ENCODE measurements at regions of chr9 and their contacts with region 1.

Region 1: DNA sequence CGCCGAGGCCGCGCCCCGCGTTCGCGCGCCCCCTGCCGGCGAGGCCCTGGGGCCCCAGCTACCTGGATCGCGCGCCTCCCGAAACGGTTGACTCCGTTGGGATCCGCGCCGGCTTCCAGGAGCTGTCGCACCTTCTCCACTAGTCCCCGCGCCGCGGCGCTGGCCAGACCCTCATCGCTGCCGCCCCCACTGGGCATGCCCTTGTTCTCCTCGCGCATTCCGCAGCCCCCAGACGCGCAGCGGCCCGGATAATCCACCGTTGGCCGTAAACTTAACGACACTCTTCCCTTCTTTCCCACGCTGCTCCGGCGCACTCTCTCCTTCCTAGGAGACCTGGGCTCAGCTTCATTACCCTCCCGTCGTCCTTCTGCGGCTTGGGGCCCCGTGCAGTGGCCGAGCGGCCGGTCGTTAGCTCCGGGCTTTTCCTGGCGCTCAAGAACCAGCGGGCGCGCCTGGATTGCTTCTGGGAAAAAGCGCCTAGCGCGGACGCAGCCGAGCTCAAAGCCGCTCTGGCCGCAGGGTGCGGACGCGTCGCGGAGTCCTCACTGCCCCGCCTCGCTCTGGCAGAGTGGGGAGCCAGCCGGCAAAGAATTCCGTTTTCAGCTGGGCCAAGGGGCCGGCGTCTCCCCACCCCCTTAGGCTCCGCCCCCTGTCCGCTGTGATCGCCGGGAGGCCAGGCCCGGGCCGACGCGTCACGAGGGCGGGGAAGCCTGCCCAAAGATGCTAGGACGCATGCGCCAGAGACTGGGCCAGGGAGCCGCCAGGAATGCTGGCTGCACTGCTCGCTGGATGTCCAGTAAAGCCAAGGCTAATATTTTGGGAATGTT is at the start of gene CDKN2B:
- DNase-seq: peak in 6 of 9 donors; percentile 30 to 82 (median 53)
- ATAC-seq: peak; percentile 90
- H3K4me3 ChIP-seq: peak within 1 kb of the TSS; percentile 57
- H3K4me3 Mint-ChIP-seq: peak within 1 kb of the TSS; percentile 46 to 86 (median 71)
- H3K27ac ChIP-seq: no peak within 1 kb of the TSS
- H3K27ac Mint-ChIP-seq: peak within 1 kb of the TSS in 2 of 9 donors; percentile 14 to 61
- H3K4me1 ChIP-seq: peaks cover 9 to 20% of the 10 kb centered on the region in 2 donors
- H3K4me1 Mint-ChIP-seq: peaks cover 17 to 32% (median 23%) of the 10 kb centered on the region in 7 donors
- H3K27me3 ChIP-seq: peaks cover 3 to 46% of the 10 kb centered on the region in 2 donors
- H3K27me3 Mint-ChIP-seq: peaks cover 67 to 84% (median 71%) of the 10 kb centered on the region in 5 donors
- total RNA-seq, gene CDKN2B: 0.32 to 4.1 (median 1.6) TPM in 3 of 5 experiments, not detected in the others

Region 2: GRCh38 chr9:21919377-21920362 is 89.3 kb before region 1 on chr9:
- CTCF ChIA-PET with region 1: no interaction called
- POLR2A ChIA-PET with region 1: no interaction called
- intact Hi-C with region 1: loop called in 1 of 2 experiments (anchors 2 kb)
- DNase-seq: peak in 7 of 9 donors; percentile 39 to 78 (median 60)
- ATAC-seq: peak; percentile 80
- H3K4me3 ChIP-seq: peak overlapping the region; percentile 2
- H3K4me3 Mint-ChIP-seq: peak overlapping the region; percentile 3 to 76 (median 58)
- H3K27ac ChIP-seq: no peak overlapping the region
- H3K27ac Mint-ChIP-seq: peak overlapping the region; percentile 15 to 90 (median 75)
- H3K4me1 ChIP-seq: peaks cover 13 to 14% of the 10 kb centered on the region in 2 donors
- H3K4me1 Mint-ChIP-seq: peaks cover 12 to 41% (median 28%) of the 10 kb centered on the region in 7 donors
- H3K27me3 ChIP-seq: no peaks in the 10 kb centered on the region
- H3K27me3 Mint-ChIP-seq: no peaks in the 10 kb centered on the region

Region 3: GRCh38 chr9:21974548-21975409 is 34.2 kb before region 1 on chr9:
- CTCF ChIA-PET with region 1: no interaction called
- POLR2A ChIA-PET with region 1: no interaction called
- intact Hi-C with region 1: loop called (anchors 1 to 2 kb)
- DNase-seq: peak in 3 of 9 donors; percentile 31 to 46 (median 41)
- ATAC-seq: peak; percentile 68
- H3K4me3 ChIP-seq: peak overlapping the region; percentile 43
- H3K4me3 Mint-ChIP-seq: peak overlapping the region; percentile 74 to 90 (median 82)
- H3K27ac ChIP-seq: no peak overlapping the region
- H3K27ac Mint-ChIP-seq: peak overlapping the region in 3 of 9 donors; percentile 26 to 64 (median 58)
- H3K4me1 ChIP-seq: peaks cover 13 to 17% of the 10 kb centered on the region in 2 donors
- H3K4me1 Mint-ChIP-seq: peaks cover 0 to 31% (median 21%) of the 10 kb centered on the region in 7 donors
- H3K27me3 ChIP-seq: peaks cover 57 to 75% of the 10 kb centered on the region in 2 donors
- H3K27me3 Mint-ChIP-seq: peaks cover 92 to 97% (median 93%) of the 10 kb centered on the region in 5 donors

Region 4: DNA sequence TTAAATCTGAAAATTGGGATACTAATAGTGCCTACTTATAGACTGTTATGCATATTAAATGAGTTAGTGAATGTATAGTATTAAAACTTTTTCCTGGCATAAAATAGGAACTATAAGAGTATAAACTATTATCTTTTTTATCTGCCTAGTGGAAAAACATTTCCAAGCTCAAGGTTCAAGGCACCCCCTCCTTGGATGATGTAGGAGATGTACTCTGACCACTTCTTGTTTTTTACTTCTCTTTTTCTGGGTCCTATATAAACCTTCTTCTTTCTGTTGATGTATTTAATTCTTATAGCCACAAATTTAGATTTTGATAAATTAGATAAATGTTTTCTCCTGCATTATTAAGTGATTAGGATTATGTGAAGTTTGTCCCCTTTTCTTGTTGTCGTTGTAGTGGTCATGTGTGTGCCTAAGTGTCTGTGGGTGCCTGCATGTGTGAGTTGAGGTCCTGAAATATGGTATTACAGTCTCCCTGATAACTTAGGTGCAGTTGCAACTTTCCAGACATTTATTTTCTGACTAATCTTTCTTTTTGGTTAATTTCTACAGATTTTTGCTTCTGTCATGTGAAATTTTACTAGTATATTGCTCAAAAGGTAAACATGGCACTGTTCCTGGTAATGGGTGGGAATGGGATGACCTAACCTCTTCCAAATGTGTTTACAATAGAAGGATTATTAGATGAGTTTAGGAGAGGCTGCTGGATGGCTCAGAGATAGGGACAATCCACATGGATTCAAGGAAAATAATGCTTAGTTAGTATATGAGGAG is 161.0 kb after region 1 on chr9:
- CTCF ChIA-PET with region 1: no interaction called
- POLR2A ChIA-PET with region 1: no interaction called
- intact Hi-C with region 1: no loop called
- DNase-seq: no peak
- ATAC-seq: peak; percentile 65
- H3K4me3 ChIP-seq: no peak overlapping the region
- H3K4me3 Mint-ChIP-seq: no peak overlapping the region
- H3K27ac ChIP-seq: no peak overlapping the region
- H3K27ac Mint-ChIP-seq: no peak overlapping the region
- H3K4me1 ChIP-seq: no peaks in the 10 kb centered on the region
- H3K4me1 Mint-ChIP-seq: peaks cover 0 to 5% (median 0%) of the 10 kb centered on the region in 7 donors
- H3K27me3 ChIP-seq: no peaks in the 10 kb centered on the region
- H3K27me3 Mint-ChIP-seq: peaks cover 0 to 38% (median 5%) of the 10 kb centered on the region in 5 donors

Region 5: GRCh38 chr9:22244141-22245011 is 235.4 kb after region 1 on chr9:
- CTCF ChIA-PET with region 1: no interaction called
- POLR2A ChIA-PET with region 1: no interaction called
- intact Hi-C with region 1: loop called in 1 of 2 experiments (anchors 1 kb)
- DNase-seq: peak in 6 of 9 donors; percentile 5 to 35 (median 16)
- ATAC-seq: peak; percentile 84
- H3K4me3 ChIP-seq: no peak overlapping the region
- H3K4me3 Mint-ChIP-seq: peak overlapping the region in 6 of 10 donors; percentile 6 to 61 (median 38)
- H3K27ac ChIP-seq: no peak overlapping the region
- H3K27ac Mint-ChIP-seq: no peak overlapping the region
- H3K4me1 ChIP-seq: no peaks in the 10 kb centered on the region
- H3K4me1 Mint-ChIP-seq: peaks cover 0 to 20% (median 9%) of the 10 kb centered on the region in 7 donors
- H3K27me3 ChIP-seq: no peaks in the 10 kb centered on the region
- H3K27me3 Mint-ChIP-seq: peaks cover 5 to 55% (median 14%) of the 10 kb centered on the region in 5 donors